BJ (cell line): ENCODE measurements at regions of chr18 and their contacts with region 1.

Region 1: GRCh38 chr18:2589345-2590068 is 18.1 kb downstream of the NDC80 start:
- DNase-seq: no peak
- H3K4me3 ChIP-seq: no peak overlapping the region
- H3K27me3 ChIP-seq: no peaks in the 10 kb centered on the region
- CTCF ChIP-seq: no peak

Region 2: GRCh38 chr18:2502394-2502793 is 87.1 kb before region 1 on chr18:
- CTCF ChIA-PET with region 1: no interaction called
- POLR2A ChIA-PET with region 1: interaction called, 10 read pairs
- DNase-seq: no peak
- H3K4me3 ChIP-seq: no peak overlapping the region
- H3K27me3 ChIP-seq: no peaks in the 10 kb centered on the region
- CTCF ChIP-seq: no peak